ENCODE measurements at regions of chr1 and their contacts with region 1.

Region 1: GRCh38 chr1:93437976-93438605 is 9.8 kb upstream of the FNBP1L start:
- DNase-seq: no peak
- ATAC-seq: peak; percentile 76
- H3K4me3 Mint-ChIP-seq: no peak overlapping the region
- H3K27ac Mint-ChIP-seq: no peak overlapping the region
- H3K4me1 Mint-ChIP-seq: peaks cover 3% of the 10 kb centered on the region
- H3K27me3 Mint-ChIP-seq: peaks cover 3% of the 10 kb centered on the region
- CTCF ChIP-seq: no peak

Region 2: DNA sequence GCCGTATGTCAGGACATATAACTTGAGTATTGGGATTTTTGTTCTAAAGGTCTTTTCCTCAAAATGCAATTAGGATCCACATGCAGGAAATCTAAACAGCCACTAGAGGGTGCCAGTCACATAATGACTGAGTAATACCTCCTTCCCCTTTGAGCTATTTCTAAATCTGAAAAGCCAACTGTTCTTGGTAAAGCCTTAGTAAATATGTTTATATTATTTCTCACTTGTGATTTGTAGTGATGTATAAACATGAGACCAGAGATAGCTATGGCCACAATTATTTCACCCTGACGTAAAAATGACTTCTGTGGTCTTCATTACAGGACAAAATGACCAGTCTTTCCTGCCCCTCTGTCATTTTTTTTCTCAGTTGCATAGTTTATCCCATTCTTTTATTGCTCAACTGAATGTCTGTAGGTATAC is 133.4 kb before region 1 on chr1:
- CTCF ChIA-PET with region 1: interaction called, 5 read pairs
- POLR2A ChIA-PET with region 1: no interaction called
- intact Hi-C with region 1: loop called (anchors 2 kb)
- DNase-seq: no peak
- ATAC-seq: peak; percentile 71
- H3K4me3 Mint-ChIP-seq: no peak overlapping the region
- H3K27ac Mint-ChIP-seq: no peak overlapping the region
- H3K4me1 Mint-ChIP-seq: no peaks in the 10 kb centered on the region
- H3K27me3 Mint-ChIP-seq: no peaks in the 10 kb centered on the region
- CTCF ChIP-seq: peak; percentile 87

Region 3: DNA sequence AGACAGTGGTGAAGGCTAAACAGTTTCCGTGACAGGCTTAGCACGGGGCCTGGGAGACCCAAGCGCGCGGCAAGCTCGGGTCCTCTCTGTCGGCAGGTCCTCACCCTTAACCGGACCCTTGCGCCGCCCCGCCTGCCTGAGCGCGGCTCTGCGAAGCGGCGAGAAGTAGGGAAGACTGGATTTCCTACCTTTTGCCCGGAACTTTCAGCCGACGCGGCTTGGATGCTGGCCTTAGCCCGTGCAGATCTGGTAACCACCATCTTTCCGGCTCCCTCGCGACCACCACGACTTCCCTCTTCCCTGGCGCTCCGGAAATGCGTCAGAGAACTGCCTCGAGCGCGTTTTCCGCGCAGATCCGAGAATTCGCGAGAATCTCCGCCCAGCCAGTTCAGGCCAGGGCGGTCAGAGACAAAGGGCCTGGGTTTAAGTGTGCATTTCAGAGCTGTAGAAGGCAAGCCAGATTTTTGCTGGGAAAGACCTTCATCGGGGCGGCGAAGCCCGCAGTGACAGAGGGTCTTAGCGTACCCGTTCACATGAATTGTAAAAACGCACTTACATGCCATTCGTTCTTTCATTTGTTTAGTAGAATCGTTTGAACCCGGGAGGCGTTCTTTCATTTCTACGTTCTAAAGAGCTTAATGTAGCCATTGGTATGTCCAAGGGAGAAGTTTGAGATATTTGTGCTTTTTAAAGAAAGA is 440.9 kb after region 1 on chr1 and contains the start of gene DNTTIP2:
- CTCF ChIA-PET with region 1: no interaction called
- POLR2A ChIA-PET with region 1: no interaction called
- intact Hi-C with region 1: loop called (anchors 1 kb)
- DNase-seq: peak; percentile 77
- ATAC-seq: peak; percentile 91
- H3K4me3 Mint-ChIP-seq: peak within 1 kb of the TSS; percentile 96
- H3K27ac Mint-ChIP-seq: peak within 1 kb of the TSS; percentile 97
- H3K4me1 Mint-ChIP-seq: peaks cover 48% of the 10 kb centered on the region
- H3K27me3 Mint-ChIP-seq: no peaks in the 10 kb centered on the region
- CTCF ChIP-seq: no peak
- total RNA-seq, gene DNTTIP2: 65.6 and 69.7 TPM in 2 replicates

Region 4: GRCh38 chr1:93909146-93910050 is 471.3 kb after region 1 on chr1 and contains the start of gene GCLM:
- CTCF ChIA-PET with region 1: no interaction called
- POLR2A ChIA-PET with region 1: no interaction called
- intact Hi-C with region 1: loop called (anchors 1 kb)
- DNase-seq: peak; percentile 95
- ATAC-seq: peak; percentile 92
- H3K4me3 Mint-ChIP-seq: peak within 1 kb of the TSS; percentile 89
- H3K27ac Mint-ChIP-seq: peak within 1 kb of the TSS; percentile 87
- H3K4me1 Mint-ChIP-seq: peaks cover 25% of the 10 kb centered on the region
- H3K27me3 Mint-ChIP-seq: no peaks in the 10 kb centered on the region
- CTCF ChIP-seq: peak; percentile 48
- total RNA-seq, gene GCLM: 8.6 and 9.6 TPM in 2 replicates

Region 5: GRCh38 chr1:94039514-94039870 is 601.4 kb after region 1 on chr1:
- CTCF ChIA-PET with region 1: no interaction called
- POLR2A ChIA-PET with region 1: no interaction called
- intact Hi-C with region 1: loop called (anchors 5 kb)
- DNase-seq: no peak
- ATAC-seq: no peak
- H3K4me3 Mint-ChIP-seq: no peak overlapping the region
- H3K27ac Mint-ChIP-seq: no peak overlapping the region
- H3K4me1 Mint-ChIP-seq: peaks cover 4% of the 10 kb centered on the region
- H3K27me3 Mint-ChIP-seq: peaks cover 32% of the 10 kb centered on the region
- CTCF ChIP-seq: no peak

Measured in activated B cell treated with CpG ODN at 0.5 μM for 24 hours (primary cell).